Activated CD8-positive, alpha-beta memory T cell treated with anti-CD3 and anti-CD28 coated beads, Interleukin-2, amount 10 ng/mL, durations not matched to agents 7 days and 5 days (primary cell): ENCODE measurements at regions of chr16 and their contacts with region 1.

Region 1: GRCh38 chr16:85086347-85087291 is 25.7 kb downstream of the CIBAR2 start:
- DNase-seq: peak; percentile 88
- ATAC-seq: peak; percentile 91
- H3K4me3 Mint-ChIP-seq: no peak overlapping the region
- H3K27ac Mint-ChIP-seq: no peak overlapping the region
- H3K4me1 Mint-ChIP-seq: peaks cover 9% of the 10 kb centered on the region
- H3K27me3 Mint-ChIP-seq: no peaks in the 10 kb centered on the region

Region 2: DNA sequence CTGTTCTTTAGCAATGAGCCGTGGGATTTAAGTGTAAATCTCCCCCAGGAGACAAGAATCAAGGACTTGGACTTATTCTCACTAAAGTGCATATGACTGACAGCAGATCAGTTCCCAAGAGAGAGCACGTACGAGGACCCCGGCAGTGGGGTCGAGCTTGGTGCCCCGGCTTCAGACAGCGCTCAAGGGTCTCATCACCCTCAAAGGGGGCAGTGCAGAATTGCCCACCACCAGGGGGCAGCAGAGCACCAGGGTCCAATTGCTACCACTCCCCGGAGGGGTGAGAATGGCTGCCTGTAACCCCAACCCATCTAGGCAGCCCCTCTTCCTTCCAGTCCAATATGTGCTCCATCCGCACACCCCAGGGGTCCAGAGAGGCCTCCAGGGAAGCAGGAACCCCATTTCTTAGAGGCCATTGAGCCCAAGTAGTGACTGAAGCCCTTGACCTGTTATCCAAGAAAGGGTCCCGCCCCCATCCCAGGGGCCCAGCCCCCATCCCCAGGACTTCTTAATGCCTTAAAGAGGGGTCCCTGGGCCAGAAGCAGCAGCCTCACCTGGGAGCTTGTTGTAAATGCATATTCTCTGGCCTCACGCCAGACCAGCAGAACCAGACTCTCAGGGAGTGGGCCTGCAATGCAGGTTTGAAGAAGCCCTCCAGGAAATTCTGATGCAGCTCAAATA is 161.4 kb before region 1 on chr16:
- CTCF ChIA-PET with region 1: interaction called, 11 read pairs
- DNase-seq: peak; percentile 74
- ATAC-seq: peak; percentile 64
- H3K4me3 Mint-ChIP-seq: no peak overlapping the region
- H3K27ac Mint-ChIP-seq: no peak overlapping the region
- H3K4me1 Mint-ChIP-seq: no peaks in the 10 kb centered on the region
- H3K27me3 Mint-ChIP-seq: no peaks in the 10 kb centered on the region

Region 3: GRCh38 chr16:84982434-84982833 is 104.2 kb before region 1 on chr16:
- CTCF ChIA-PET with region 1: interaction called, 13 read pairs
- DNase-seq: no peak
- ATAC-seq: no peak
- H3K4me3 Mint-ChIP-seq: no peak overlapping the region
- H3K27ac Mint-ChIP-seq: no peak overlapping the region
- H3K4me1 Mint-ChIP-seq: no peaks in the 10 kb centered on the region
- H3K27me3 Mint-ChIP-seq: no peaks in the 10 kb centered on the region

Region 4: DNA sequence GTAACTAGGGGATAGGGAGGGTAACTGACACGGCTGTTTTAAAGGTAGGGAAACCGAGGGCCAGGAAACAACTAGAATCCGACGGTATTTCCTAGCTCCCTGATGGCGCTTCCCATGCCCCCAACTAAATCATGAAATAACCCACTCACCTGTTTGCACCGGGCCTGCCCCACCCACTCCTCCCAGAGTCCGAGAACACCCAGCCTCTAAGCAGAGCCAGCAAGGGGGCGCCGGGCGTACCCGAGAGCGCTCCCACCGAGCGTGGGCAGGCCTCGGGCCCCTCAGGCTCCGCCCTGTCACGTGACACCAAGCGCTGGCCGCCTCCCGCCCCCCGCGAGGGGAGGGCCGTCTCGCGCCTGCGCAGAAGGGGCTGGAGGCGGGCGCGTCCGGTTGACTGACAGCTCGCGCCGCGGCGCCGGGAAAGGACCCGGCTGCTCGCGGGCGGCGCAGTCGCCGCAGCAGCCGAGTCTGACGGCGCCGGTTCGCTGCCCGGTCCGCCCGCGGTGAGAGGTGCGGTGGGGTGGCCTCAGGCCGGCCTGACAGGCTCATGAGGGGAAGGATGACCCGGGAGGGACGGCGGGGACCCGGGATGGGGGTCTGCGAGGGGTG is 59.2 kb before region 1 on chr16 and contains the start of gene KIAA0513:
- CTCF ChIA-PET with region 1: interaction called, 43 read pairs
- DNase-seq: peak; percentile 96
- ATAC-seq: peak; percentile 81
- H3K4me3 Mint-ChIP-seq: peak within 1 kb of the TSS; percentile 86
- H3K27ac Mint-ChIP-seq: peak within 1 kb of the TSS; percentile 87
- H3K4me1 Mint-ChIP-seq: peaks cover 31% of the 10 kb centered on the region
- H3K27me3 Mint-ChIP-seq: no peaks in the 10 kb centered on the region
- total RNA-seq, gene KIAA0513: 7.9 to 9.6 TPM

Region 5: GRCh38 chr16:85104821-85105391 is 18.3 kb after region 1 on chr16:
- CTCF ChIA-PET with region 1: interaction called, 16 read pairs
- DNase-seq: peak; percentile 71
- ATAC-seq: peak; percentile 89
- H3K4me3 Mint-ChIP-seq: no peak overlapping the region
- H3K27ac Mint-ChIP-seq: peak overlapping the region; percentile 84
- H3K4me1 Mint-ChIP-seq: peaks cover 33% of the 10 kb centered on the region
- H3K27me3 Mint-ChIP-seq: no peaks in the 10 kb centered on the region

Region 6: DNA sequence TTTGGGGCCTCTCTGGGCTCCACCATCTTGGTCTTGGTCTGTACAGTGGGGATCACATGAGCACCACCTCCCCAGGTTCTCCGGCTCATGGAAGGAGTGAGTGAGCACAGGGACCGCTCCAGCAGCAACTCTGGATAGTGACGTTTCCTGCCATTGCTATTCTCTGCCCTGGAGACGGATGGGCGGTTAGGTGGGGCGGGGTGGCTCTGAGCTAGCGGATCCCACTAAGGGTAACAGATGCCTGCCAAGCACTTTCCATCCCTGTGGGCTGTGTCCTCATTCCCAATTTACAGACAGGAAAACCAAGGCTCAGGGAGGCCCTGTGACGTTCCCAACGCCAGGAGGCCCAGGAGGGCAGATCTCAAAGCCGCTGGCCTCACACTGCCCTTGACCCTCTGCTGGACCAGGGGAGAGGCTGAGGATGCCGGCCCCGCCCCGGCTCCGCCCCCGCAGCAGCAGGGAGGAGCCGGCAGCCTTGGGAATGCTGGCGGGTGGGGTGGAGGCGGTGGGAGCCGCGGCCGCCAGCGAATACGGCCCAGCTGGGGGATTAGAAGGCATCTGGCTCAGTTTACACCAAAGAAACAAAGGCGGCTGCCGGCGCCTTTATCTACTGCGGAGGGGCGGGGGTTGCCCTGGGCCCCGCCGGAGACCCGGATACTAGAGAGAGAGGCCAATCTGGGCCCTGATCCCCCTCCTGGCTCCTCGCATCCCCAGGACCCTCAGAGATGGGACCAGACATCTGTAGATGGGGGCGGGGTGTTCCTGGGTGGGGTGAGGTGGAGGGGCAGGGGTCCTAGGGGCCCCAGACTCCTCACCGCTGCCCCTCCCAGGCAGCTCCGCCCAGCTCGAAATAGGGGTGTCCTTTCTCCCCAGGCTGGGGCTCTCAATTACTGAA is 147.9 kb after region 1 on chr16:
- CTCF ChIA-PET with region 1: no interaction called
- DNase-seq: no peak
- ATAC-seq: no peak
- H3K4me3 Mint-ChIP-seq: no peak overlapping the region
- H3K27ac Mint-ChIP-seq: no peak overlapping the region
- H3K4me1 Mint-ChIP-seq: peaks cover 3% of the 10 kb centered on the region
- H3K27me3 Mint-ChIP-seq: peaks cover 15% of the 10 kb centered on the region